ENCODE measurements at regions of chr16 and their contacts with region 1.

Region 1: GRCh38 chr16:85114909-85115567 is 2.8 kb upstream of the CIBAR2 start:
- DNase-seq: peak; percentile 96
- H3K4me3 Mint-ChIP-seq: peak overlapping the region; percentile 43
- H3K27ac Mint-ChIP-seq: peak overlapping the region; percentile 33
- H3K4me1 Mint-ChIP-seq: peaks cover 10% of the 10 kb centered on the region
- H3K27me3 Mint-ChIP-seq: peaks cover 51% of the 10 kb centered on the region
- CTCF ChIP-seq: peak; percentile 87

Region 2: GRCh38 chr16:84699147-84699711 is 415.8 kb before region 1 on chr16:
- CTCF ChIA-PET with region 1: no interaction called
- intact Hi-C with region 1: no loop called
- DNase-seq: peak; percentile 33
- H3K4me3 Mint-ChIP-seq: peak overlapping the region; percentile 80
- H3K27ac Mint-ChIP-seq: no peak overlapping the region
- H3K4me1 Mint-ChIP-seq: peaks cover 19% of the 10 kb centered on the region
- H3K27me3 Mint-ChIP-seq: no peaks in the 10 kb centered on the region
- CTCF ChIP-seq: no peak

Region 3: DNA sequence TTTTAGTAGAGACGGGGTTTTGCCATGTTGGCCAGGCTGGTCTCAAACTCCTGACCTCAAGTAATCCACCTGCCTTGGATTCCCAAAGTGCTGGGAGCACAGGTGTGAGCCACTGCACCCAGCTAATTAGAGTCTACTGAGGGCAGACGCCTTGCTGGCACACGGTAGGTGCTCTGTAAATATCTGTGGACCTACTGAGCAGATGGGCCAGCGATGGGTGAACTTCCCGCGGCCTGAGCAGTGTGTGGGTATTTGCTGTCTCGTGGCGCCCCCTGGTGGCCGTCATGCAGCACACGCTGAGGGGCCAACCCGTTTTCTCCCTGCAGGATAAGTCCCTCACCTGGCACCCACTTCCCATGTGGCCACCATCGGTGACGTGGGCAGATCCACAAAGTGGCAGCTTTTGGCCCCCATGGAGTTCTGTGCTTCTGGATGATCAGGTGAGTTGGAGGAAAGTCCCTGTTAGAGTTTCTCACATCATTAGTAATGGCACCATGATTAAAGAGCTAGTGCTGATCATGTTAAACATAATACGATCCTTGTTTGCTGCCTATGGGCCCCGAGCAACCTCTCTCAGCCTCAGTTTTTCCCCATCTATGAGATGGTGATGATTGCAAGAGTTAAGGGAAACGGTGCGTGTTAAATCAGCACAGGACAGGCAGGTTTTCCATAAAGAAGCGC is 144.5 kb before region 1 on chr16:
- CTCF ChIA-PET with region 1: no interaction called
- intact Hi-C with region 1: no loop called
- DNase-seq: peak; percentile 88
- H3K4me3 Mint-ChIP-seq: no peak overlapping the region
- H3K27ac Mint-ChIP-seq: no peak overlapping the region
- H3K4me1 Mint-ChIP-seq: no peaks in the 10 kb centered on the region
- H3K27me3 Mint-ChIP-seq: peaks cover 9% of the 10 kb centered on the region
- CTCF ChIP-seq: peak; percentile 95

Region 4: GRCh38 chr16:85234310-85235204 is 119.5 kb after region 1 on chr16:
- CTCF ChIA-PET with region 1: no interaction called
- intact Hi-C with region 1: loop called (anchors 10 kb)
- DNase-seq: peak; percentile 54
- H3K4me3 Mint-ChIP-seq: peak overlapping the region; percentile 27
- H3K27ac Mint-ChIP-seq: no peak overlapping the region
- H3K4me1 Mint-ChIP-seq: no peaks in the 10 kb centered on the region
- H3K27me3 Mint-ChIP-seq: peaks cover 98% of the 10 kb centered on the region
- CTCF ChIP-seq: no peak

Region 5: GRCh38 chr16:85982563-85982939 is 867.5 kb after region 1 on chr16:
- CTCF ChIA-PET with region 1: no interaction called
- intact Hi-C with region 1: no loop called
- DNase-seq: no peak
- H3K4me3 Mint-ChIP-seq: no peak overlapping the region
- H3K27ac Mint-ChIP-seq: no peak overlapping the region
- H3K4me1 Mint-ChIP-seq: peaks cover 16% of the 10 kb centered on the region
- H3K27me3 Mint-ChIP-seq: peaks cover 17% of the 10 kb centered on the region
- CTCF ChIP-seq: no peak

Measured in Calu3 (cell line).